GM10248 (cell line): ENCODE measurements at regions of chr4 and their contacts with region 1.

Region 1: DNA sequence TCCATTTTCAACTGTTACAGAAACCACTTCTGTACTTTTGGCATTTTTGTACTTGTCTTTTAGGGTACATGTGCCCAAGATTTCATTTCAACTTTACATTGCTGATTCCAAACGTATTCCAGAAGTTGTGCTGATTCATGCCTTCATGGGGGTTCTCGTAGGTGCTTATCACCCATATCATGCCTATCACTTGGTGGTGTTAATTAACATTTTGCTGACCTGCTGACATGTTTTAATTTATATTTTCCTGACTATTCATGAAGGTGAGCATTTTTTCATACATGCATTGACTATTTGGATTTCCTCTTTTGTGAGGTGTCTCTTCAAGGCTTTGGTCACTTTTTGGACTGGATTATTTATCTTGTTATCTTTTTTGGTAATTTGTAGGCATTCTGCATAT is 64.1 kb downstream of the CC2D2A start:
- DNase-seq: no peak
- CTCF ChIP-seq: no peak

Region 2: DNA sequence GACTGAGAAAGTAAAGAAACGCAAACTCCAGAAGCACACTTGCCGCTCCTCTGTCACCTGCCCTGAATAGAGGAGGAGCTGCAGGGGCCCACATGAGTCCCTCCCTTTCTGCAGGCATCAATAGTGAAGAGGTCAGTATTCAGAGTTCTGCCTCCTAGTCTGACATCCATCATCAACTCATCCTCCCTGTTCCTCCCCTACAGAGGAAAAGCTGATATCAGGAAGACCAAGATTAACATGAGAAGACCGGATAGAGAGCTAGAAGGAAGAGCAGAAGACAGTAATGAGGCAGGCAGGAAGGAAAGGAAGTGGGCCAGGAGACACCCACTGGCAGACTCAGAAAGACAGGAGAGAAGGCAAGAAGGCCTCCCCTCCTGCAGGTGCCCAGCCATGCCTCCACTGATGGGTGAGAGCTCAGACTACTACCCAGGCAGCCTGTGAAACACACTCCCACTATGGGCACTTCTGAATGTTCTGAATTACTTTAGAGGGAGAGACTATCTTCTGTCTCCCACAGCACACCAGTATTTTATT is 10.4 kb after region 1 on chr4:
- CTCF ChIA-PET with region 1: interaction called, 14 read pairs
- POLR2A ChIA-PET with region 1: no interaction called
- DNase-seq: no peak
- CTCF ChIP-seq: no peak